Activated T-helper 2 cell treated with anti-CD3 and anti-CD28 coated beads, Interferon-gamma antibody, Interleukin-2, Interleukin-4, amounts not matched to agents 10 μg/mL and 5 μg/mL and 100 μg/mL, durations not matched to agents 14 hours and 24 hours and 36 hours (primary cell): ENCODE measurements at regions of chr11 and their contacts with region 1.

Region 1: DNA sequence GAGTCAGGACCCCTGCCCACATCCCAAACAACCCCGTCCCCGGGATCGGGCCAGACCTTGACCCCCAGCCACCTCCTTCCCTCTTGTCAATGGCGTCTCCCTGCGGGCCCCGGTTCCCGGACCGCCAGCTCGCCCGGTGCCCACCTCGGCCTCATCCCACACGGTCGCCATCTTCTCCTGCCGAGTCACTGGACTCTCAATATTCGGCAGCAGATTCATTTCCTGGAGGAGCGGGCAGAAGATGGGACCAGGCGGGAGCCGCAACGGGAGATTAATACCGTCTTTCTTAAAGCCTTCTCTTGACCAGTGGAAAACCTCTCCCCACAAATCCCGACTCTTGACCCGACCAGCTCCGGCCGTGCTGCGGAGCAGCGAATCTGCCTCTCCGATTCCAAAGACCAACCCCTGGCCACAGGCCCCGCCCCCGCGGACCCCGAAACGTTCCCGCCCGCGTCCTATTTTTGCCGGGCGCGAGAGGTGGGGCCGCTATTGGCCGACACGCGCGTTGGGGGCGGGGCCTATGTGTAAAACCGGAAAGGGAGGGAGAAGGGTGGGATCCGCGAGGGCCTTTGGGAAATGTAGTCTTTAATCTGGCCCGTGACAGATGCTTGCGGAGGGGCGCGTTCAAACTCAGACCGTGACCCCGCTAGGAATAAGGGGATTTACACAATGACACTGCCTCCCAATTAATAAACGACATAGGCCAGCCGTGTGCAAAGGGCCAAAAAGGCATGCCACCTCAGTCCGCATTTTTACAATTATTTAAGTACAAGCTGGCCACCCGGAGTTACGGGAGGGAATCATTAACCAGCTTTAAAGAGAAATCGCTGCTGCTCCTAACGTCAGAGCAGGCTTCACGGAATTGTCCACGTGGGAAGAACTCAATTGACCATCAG is at the start of gene PSMC3:
- DNase-seq: peak; percentile 96
- H3K4me3 Mint-ChIP-seq: peak within 1 kb of the TSS; percentile 99
- H3K27ac Mint-ChIP-seq: peak within 1 kb of the TSS; percentile 99
- H3K4me1 Mint-ChIP-seq: peaks cover 20% of the 10 kb centered on the region
- H3K27me3 Mint-ChIP-seq: no peaks in the 10 kb centered on the region
- total RNA-seq, gene PSMC3: 214 and 219 TPM in 2 replicates

Region 2: GRCh38 chr11:46845740-46846509 is 580.4 kb before region 1 on chr11 and contains the start of gene CKAP5:
- intact Hi-C with region 1: loop called (anchors 5 kb)
- DNase-seq: peak; percentile 83
- H3K4me3 Mint-ChIP-seq: peak within 1 kb of the TSS; percentile 96
- H3K27ac Mint-ChIP-seq: peak within 1 kb of the TSS; percentile 97
- H3K4me1 Mint-ChIP-seq: peaks cover 35% of the 10 kb centered on the region
- H3K27me3 Mint-ChIP-seq: no peaks in the 10 kb centered on the region
- total RNA-seq, gene CKAP5: 127 and 136 TPM in 2 replicates

Region 3: GRCh38 chr11:47176328-47177228 is 249.7 kb before region 1 on chr11 and contains the start of gene ARFGAP2:
- intact Hi-C with region 1: loop called (anchors 1 kb)
- DNase-seq: peak; percentile 95
- H3K4me3 Mint-ChIP-seq: peak within 1 kb of the TSS; percentile 97
- H3K27ac Mint-ChIP-seq: peak within 1 kb of the TSS; percentile 100
- H3K4me1 Mint-ChIP-seq: peaks cover 28% of the 10 kb centered on the region
- H3K27me3 Mint-ChIP-seq: no peaks in the 10 kb centered on the region
- total RNA-seq, gene ARFGAP2: 98.6 and 104 TPM in 2 replicates

Region 4: DNA sequence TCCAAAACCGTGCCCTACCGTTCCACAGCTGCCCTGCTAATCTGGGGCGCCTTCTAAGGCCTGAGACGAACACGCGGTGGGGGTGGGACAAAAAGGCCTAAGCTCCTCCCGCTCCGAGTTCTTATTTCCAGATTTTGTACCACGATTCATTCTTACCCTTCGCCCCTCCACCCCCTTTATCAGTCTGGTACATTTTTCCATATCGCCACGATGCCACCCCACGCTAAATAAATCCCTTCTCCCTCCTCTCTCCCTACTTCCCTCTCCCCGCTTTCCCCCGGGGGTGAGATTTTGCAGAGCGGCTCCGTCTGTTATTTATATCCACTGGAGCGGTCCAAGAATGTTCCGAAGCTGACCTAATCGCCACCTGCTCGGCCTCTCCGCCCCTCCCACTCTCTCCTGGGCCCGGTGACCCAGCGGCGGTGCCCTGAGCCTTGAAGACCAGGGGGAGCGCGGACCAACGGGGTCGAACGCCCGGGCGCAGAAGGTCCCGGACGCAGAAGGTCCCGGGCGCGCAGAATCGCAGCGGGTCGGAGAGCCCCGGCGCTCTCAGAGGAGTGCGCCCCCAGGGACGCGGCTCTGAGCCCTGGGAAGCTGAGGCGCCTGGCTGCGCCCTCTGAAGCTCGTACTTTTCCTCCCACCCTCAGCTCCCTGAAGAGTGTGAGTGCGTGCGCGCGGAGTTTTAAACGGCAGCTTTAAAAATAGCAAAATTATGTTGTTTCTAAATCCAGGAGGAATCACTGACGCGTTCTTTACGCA is 239.2 kb before region 1 on chr11:
- intact Hi-C with region 1: no loop called
- DNase-seq: peak; percentile 26
- H3K4me3 Mint-ChIP-seq: peak overlapping the region; percentile 73
- H3K27ac Mint-ChIP-seq: peak overlapping the region; percentile 65
- H3K4me1 Mint-ChIP-seq: peaks cover 6% of the 10 kb centered on the region
- H3K27me3 Mint-ChIP-seq: peaks cover 36% of the 10 kb centered on the region

Region 5: GRCh38 chr11:47387911-47388678 is 38.2 kb before region 1 on chr11:
- intact Hi-C with region 1: no loop called
- DNase-seq: no peak
- H3K4me3 Mint-ChIP-seq: no peak overlapping the region
- H3K27ac Mint-ChIP-seq: no peak overlapping the region
- H3K4me1 Mint-ChIP-seq: peaks cover 9% of the 10 kb centered on the region
- H3K27me3 Mint-ChIP-seq: no peaks in the 10 kb centered on the region

Region 6: DNA sequence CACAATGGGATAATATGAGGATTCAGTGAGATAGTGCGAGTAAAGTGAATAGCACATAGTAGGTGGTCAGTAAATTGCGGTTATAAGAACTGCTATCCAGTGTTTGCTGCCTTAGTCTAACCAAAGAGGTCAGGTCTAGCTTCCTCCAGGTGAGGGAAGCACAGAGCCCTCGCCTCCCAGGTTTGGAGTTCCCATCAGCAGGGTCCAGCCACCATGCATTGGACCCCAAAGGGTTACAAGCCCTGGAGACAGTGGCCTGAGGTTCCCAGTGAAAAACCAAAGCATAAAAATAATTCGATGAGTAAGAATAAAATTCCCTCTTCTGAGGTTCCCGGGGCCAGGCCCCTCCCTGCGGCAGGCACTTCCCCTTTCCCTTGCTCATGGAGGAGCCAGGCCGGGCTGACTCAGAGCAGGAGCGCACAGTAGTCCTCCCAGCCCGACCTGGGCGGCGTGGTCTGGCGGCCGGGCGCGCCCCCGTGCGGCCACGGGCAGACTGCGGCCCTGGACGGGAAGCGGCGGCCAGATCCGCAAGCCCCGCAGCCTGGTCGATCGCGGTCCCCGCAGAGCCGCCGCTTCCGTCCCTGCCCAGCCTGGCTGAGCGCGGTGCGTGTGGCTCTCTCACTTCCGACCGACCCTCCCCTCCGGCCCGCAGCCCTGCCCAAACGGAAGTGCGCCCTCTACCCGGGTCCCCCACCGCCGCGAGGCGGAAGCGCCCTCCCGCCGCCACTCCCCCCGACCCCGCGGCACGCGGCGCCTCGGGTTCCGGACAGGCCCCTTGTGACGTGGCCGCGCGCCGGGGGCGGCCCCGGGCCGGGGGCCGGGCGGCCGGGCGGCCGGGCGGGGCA is 18.3 kb before region 1 on chr11 and contains the start of gene SLC39A13:
- intact Hi-C with region 1: loop called (anchors 2 kb)
- DNase-seq: peak; percentile 93
- H3K4me3 Mint-ChIP-seq: peak within 1 kb of the TSS; percentile 96
- H3K27ac Mint-ChIP-seq: peak within 1 kb of the TSS; percentile 89
- H3K4me1 Mint-ChIP-seq: peaks cover 17% of the 10 kb centered on the region
- H3K27me3 Mint-ChIP-seq: no peaks in the 10 kb centered on the region
- total RNA-seq, gene SLC39A13: 12.5 and 15.2 TPM in 2 replicates

Region 7: GRCh38 chr11:47847892-47848635 is 421.8 kb after region 1 on chr11 and contains the start of gene NUP160:
- intact Hi-C with region 1: loop called (anchors 5 kb)
- DNase-seq: peak; percentile 85
- H3K4me3 Mint-ChIP-seq: peak within 1 kb of the TSS; percentile 97
- H3K27ac Mint-ChIP-seq: peak within 1 kb of the TSS; percentile 98
- H3K4me1 Mint-ChIP-seq: peaks cover 33% of the 10 kb centered on the region
- H3K27me3 Mint-ChIP-seq: no peaks in the 10 kb centered on the region
- total RNA-seq, gene NUP160: 81.2 and 84.7 TPM in 2 replicates